ENCODE measurements at regions of chr6 and their contacts with region 1.

Region 1: DNA sequence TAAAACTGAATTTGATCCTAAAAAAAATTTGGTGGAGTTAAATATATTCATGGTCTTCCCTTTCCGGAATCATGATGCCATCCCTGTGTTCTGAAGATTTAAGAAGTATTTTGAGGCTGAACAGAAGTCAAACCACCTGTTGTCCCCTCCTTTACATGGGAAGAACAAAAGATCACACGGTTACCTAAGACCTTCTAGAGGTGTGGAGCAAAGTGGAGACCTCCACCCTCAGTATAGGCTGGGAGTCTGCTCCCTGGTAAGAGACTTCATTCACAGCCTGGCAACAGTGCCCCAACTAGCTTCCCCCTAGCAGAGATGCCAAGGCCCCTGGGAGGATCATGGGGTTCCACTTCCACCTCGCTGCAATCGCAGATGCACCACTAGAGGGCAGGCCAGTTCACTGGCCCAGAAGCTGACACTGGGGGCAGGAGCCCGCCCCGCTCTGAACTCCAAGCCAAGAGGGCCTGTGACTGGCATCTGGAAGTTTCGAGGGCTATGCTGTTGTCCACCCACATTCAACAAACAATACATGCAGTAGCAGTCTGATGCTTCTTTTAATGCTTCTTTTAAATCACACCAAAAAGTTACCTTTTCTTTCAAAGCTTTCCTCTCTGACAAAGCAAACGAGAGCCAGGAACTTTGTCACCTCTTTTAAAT is 19.5 kb upstream of the UBE2J1 start:
- DNase-seq: peak in 1 of 2 experiments; percentile 92
- H3K4me3 ChIP-seq: no peak overlapping the region
- H3K27ac ChIP-seq: no peak overlapping the region
- H3K4me1 ChIP-seq: peaks cover 0 to 7% (median 4%) of the 10 kb centered on the region in 4 experiments; a peak in 4 of 7 replicates
- H3K27me3 ChIP-seq: no peaks in the 10 kb centered on the region
- CTCF ChIP-seq: peak; percentile 95 to 99 (median 98)
- EP300 ChIP-seq: no peak
- POLR2A ChIP-seq: no peak
- RAD21 ChIP-seq: peak; percentile 84 to 91

Region 2: DNA sequence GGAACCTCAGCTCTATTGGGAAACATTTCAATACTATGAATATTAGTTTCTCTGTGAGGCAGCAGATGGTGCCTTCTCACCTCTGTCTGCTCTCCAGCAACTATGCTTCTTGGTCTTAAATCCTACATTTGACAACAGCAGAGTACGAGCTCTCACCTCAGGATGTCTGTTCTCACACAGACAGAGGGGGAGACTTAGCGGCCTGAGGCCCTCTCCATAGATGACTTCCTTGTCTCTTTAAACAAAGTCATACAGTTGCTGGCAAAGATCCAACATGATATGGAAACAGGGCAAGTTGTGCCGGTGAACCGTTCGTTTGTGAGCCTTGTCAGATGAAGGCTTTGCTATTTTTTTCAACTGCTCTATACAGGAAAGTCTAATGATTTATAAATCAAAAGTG is 111.1 kb before region 1 on chr6:
- CTCF ChIA-PET with region 1: no interaction called
- POLR2A ChIA-PET with region 1: no interaction called
- DNase-seq: peak in 1 of 2 experiments; percentile 32
- H3K4me3 ChIP-seq: no peak overlapping the region
- H3K27ac ChIP-seq: no peak overlapping the region
- H3K4me1 ChIP-seq: no peaks in the 10 kb centered on the region
- H3K27me3 ChIP-seq: no peaks in the 10 kb centered on the region
- CTCF ChIP-seq: no peak
- EP300 ChIP-seq: no peak
- POLR2A ChIP-seq: no peak
- RAD21 ChIP-seq: no peak

Region 3: GRCh38 chr6:89297695-89298351 is 74.2 kb before region 1 on chr6:
- CTCF ChIA-PET with region 1: interaction called, 20 read pairs
- POLR2A ChIA-PET with region 1: no interaction called
- DNase-seq: no peak
- H3K4me3 ChIP-seq: no peak overlapping the region
- H3K27ac ChIP-seq: no peak overlapping the region
- H3K4me1 ChIP-seq: peaks cover 0 to 6% (median 0%) of the 10 kb centered on the region in 4 experiments; a peak in 3 of 7 replicates
- H3K27me3 ChIP-seq: 0 out of 7 replicates have a peak, but pooled peaks cover 0 to 2% (median 0%) of the 10 kb centered on the region in 4 experiments
- CTCF ChIP-seq: no peak
- EP300 ChIP-seq: no peak
- POLR2A ChIP-seq: no peak
- RAD21 ChIP-seq: no peak

Region 4: DNA sequence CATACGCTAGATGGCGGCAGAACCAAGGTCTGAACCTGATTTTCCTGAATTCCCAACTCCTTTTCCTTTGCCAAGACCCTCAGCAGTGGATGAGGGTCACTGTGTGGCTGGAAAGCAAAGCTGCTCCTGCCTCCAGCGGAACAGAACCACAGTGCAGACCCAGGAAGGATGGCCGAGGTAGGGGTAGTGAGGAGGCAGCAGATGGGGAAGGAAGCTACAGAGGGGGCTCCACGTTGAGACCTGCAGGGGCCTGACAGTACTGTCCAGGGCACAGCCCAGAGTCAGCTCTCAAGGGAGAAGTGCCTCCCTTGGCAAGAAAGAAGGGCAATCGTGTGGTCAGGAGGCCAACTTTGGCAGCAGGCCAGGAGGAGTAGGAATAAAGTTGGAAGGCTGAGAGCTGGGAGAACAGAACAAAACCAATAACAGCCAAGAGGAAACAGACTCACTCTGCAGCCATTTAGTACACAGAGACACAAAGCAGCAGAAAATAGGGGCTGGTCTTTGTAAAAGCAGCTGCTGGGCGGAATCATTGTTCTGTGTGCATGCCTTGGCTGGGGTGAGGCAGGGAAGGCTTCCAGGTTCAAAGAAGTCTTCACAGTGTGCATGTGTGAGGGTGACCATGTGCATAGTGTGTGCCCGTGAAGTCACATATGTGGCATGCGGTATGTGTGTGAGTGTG is 60.0 kb before region 1 on chr6:
- CTCF ChIA-PET with region 1: interaction called, 133 read pairs
- POLR2A ChIA-PET with region 1: interaction called, 3 read pairs
- DNase-seq: peak; percentile 38 to 80
- H3K4me3 ChIP-seq: no peak overlapping the region
- H3K27ac ChIP-seq: no peak overlapping the region
- H3K4me1 ChIP-seq: peaks cover 0 to 3% (median 1%) of the 10 kb centered on the region in 4 experiments; a peak in 3 of 7 replicates
- H3K27me3 ChIP-seq: no peaks in the 10 kb centered on the region
- CTCF ChIP-seq: peak; percentile 40 to 98 (median 97)
- EP300 ChIP-seq: no peak
- POLR2A ChIP-seq: no peak
- RAD21 ChIP-seq: peak; percentile 92 to 94

Region 5: GRCh38 chr6:89360415-89360999 is 11.5 kb before region 1 on chr6:
- CTCF ChIA-PET with region 1: interaction called, 130 read pairs
- POLR2A ChIA-PET with region 1: interaction called, 5 read pairs
- DNase-seq: no peak
- H3K4me3 ChIP-seq: no peak overlapping the region
- H3K27ac ChIP-seq: no peak overlapping the region
- H3K4me1 ChIP-seq: no peaks in the 10 kb centered on the region
- H3K27me3 ChIP-seq: no peaks in the 10 kb centered on the region; a peak in 1 of 7 replicates
- CTCF ChIP-seq: no peak
- EP300 ChIP-seq: no peak
- POLR2A ChIP-seq: no peak
- RAD21 ChIP-seq: no peak

Region 6: GRCh38 chr6:89400912-89401399 is 29.0 kb after region 1 on chr6:
- CTCF ChIA-PET with region 1: interaction called, 10 read pairs
- POLR2A ChIA-PET with region 1: no interaction called
- DNase-seq: no peak
- H3K4me3 ChIP-seq: no peak overlapping the region
- H3K27ac ChIP-seq: no peak overlapping the region
- H3K4me1 ChIP-seq: peaks cover under 1 to 7% (median 2%) of the 10 kb centered on the region in 4 experiments; a peak in 6 of 7 replicates
- H3K27me3 ChIP-seq: no peaks in the 10 kb centered on the region
- CTCF ChIP-seq: no peak
- EP300 ChIP-seq: no peak
- POLR2A ChIP-seq: no peak
- RAD21 ChIP-seq: no peak

Region 7: GRCh38 chr6:89432875-89433251 is 60.9 kb after region 1 on chr6 and contains the start of gene ANKRD6:
- CTCF ChIA-PET with region 1: interaction called, 29 read pairs
- POLR2A ChIA-PET with region 1: no interaction called
- DNase-seq: peak; percentile 29 to 97
- H3K4me3 ChIP-seq: peak within 1 kb of the TSS; percentile 42 to 79 (median 51)
- H3K27ac ChIP-seq: no peak within 1 kb of the TSS
- H3K4me1 ChIP-seq: peaks cover 0 to 6% (median 2%) of the 10 kb centered on the region in 4 experiments; a peak in 3 of 7 replicates
- H3K27me3 ChIP-seq: peaks cover 0 to 16% (median 6%) of the 10 kb centered on the region in 4 experiments; a peak in 5 of 7 replicates
- CTCF ChIP-seq: peak; percentile 83 to 98 (median 92)
- EP300 ChIP-seq: peak in 1 of 2 experiments; percentile 39; a peak in 1 of 3 replicates
- POLR2A ChIP-seq: no peak
- RAD21 ChIP-seq: peak; percentile 86 to 100
- total RNA-seq, gene ANKRD6: 11.0 and 12.8 TPM in 2 replicates